ENCODE measurements at regions of chr20 and their contacts with region 1.

Region 1: DNA sequence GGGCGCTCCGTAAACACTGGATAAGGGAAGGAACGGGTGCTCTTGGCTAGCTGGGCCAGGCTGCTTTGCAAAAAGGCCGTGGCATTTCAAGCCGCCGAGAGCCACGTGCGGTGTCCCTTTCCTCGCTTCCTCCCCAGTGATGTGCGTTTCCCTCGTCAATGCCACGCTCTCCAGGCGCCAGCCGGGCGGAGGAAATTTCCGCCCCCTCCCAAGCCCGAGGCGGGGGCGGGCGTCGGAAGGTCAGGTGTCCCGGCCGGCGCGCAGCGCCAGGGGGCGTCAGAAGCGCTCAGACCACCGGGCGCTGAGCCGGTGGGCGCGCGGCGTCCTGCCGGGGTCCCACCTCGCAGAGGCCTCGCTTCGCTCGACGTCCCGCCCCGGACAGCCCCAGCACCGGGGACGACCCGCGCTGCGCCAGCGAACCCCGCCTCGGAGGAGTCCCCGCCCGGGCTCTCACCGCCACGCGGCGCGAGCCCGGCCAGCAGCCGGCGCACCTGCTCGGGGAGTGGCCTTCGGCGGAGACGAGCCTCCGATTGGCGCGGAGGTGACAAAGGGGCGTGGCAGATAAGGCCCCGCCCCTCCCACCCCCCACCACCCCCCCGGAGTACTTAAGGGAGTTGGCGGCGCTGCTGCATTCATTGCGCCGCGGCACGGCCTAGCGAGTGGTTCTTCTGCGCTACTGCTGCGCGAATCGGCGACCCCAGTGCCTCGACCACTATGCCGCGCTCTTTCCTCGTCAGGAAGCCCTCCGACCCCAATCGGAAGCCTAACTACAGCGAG is at the start of gene SNAI1:
- DNase-seq: peak; percentile 100
- H3K27ac ChIP-seq: no peak within 1 kb of the TSS
- CTCF ChIP-seq: peak; percentile 73

Region 2: DNA sequence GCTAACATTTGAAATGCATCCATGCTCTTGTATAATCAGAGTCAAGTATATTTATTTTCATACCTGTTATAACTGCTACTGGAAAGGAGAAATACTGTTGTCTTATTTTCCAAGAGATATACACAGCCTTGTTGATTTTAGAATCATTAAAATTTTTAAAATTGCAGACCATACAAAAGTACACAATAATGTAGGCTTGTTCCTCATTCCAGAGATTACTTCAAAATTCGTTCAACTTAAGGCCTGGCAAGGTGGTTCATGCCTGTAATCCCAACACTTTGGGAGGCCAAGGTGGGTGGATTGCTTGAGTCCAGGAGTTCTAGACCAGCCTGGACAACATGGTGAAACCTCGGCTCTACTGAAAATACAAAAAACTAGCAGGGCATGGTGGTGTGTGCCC is 40.2 kb before region 1 on chr20:
- CTCF ChIA-PET with region 1: interaction called, 20 read pairs
- POLR2A ChIA-PET with region 1: no interaction called
- DNase-seq: no peak
- H3K27ac ChIP-seq: no peak overlapping the region
- CTCF ChIP-seq: no peak

Region 3: GRCh38 chr20:50003253-50003656 is 20.7 kb after region 1 on chr20:
- CTCF ChIA-PET with region 1: interaction called, 11 read pairs
- POLR2A ChIA-PET with region 1: no interaction called
- DNase-seq: peak; percentile 72
- H3K27ac ChIP-seq: peak overlapping the region; percentile 55
- CTCF ChIP-seq: no peak

Region 4: DNA sequence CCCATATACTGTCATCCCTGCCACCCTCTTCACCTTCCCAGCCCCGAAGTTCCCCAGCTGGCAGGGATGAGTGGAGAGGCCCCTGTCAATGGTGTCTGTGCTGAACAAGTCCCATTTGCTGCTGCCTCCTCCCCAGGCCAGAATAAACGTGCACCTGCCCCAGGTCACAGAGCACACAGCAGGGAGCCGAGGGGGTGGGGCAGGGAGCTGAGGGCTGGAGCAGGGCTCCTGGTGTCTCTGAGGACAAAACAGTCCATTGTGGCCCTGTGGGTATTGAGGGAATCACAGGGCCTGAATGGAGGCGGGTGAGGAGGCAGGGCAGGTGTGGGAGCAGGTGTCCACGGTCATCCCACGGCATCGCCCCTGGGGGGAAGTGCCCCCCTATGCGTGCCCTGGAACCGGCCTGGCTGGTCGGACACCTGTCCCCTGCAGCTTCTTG is 56.1 kb after region 1 on chr20:
- CTCF ChIA-PET with region 1: interaction called, 22 read pairs
- POLR2A ChIA-PET with region 1: no interaction called
- DNase-seq: no peak
- H3K27ac ChIP-seq: no peak overlapping the region
- CTCF ChIP-seq: no peak

Region 5: GRCh38 chr20:50070991-50071888 is 88.7 kb after region 1 on chr20:
- CTCF ChIA-PET with region 1: interaction called, 416 read pairs
- POLR2A ChIA-PET with region 1: interaction called, 4 read pairs
- DNase-seq: peak; percentile 95
- H3K27ac ChIP-seq: no peak overlapping the region
- CTCF ChIP-seq: peak; percentile 100

Region 6: DNA sequence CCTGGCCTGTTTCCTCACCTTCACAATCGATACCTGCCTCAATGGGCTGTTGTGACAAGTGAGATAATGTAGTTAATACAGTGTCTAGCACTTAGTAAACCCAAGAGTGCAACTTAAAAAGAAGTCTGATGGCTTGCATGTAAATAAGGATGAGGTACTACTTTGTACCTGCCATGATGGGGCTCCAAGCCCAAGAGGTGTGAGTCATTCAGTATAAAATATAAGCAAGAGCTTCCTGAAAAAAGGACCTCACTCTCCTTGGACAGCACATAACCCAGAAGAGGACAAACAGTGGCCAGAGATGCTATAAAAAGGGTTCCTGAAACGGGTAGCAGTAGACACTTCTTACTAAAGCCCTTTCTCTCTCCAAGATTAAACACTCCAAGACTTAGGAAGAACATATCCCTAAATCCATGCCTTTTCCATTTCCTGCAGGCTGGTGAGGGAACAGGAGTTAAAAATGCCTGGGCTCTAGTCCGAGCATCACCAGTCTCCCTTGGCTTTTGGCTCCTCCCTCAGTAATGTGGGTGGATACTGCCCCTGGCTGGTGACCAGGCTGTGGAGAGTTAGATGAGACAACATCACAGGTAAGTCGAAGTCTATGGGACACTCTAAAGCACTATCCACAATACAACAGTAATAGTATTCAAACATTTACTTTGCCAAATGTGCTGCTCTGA is 126.2 kb after region 1 on chr20:
- CTCF ChIA-PET with region 1: interaction called, 17 read pairs
- POLR2A ChIA-PET with region 1: no interaction called
- DNase-seq: no peak
- H3K27ac ChIP-seq: no peak overlapping the region
- CTCF ChIP-seq: no peak

Region 7: GRCh38 chr20:50179507-50180016 is 197.0 kb after region 1 on chr20:
- CTCF ChIA-PET with region 1: interaction called, 14 read pairs
- POLR2A ChIA-PET with region 1: no interaction called
- DNase-seq: no peak
- H3K27ac ChIP-seq: peak overlapping the region; percentile 29
- CTCF ChIP-seq: peak; percentile 75

Measured in RWPE1 (cell line).